WTC11 (cell line): ENCODE measurements at regions of chr3 and their contacts with region 1.

Region 1: GRCh38 chr3:67113802-67114407 is 115.8 kb downstream of the KBTBD8 start:
- DNase-seq: peak; percentile 88
- ATAC-seq: peak; percentile 95
- H3K4me3 Mint-ChIP-seq: no peak overlapping the region
- H3K27ac Mint-ChIP-seq: no peak overlapping the region
- H3K4me1 Mint-ChIP-seq: peaks cover 12% of the 10 kb centered on the region
- H3K27me3 Mint-ChIP-seq: no peaks in the 10 kb centered on the region
- CTCF ChIP-seq: peak; percentile 91

Region 2: GRCh38 chr3:66989860-66990665 is 123.8 kb before region 1 on chr3:
- CTCF ChIA-PET with region 1: interaction called, 15 read pairs
- POLR2A ChIA-PET with region 1: no interaction called
- DNase-seq: no peak
- ATAC-seq: no peak
- H3K4me3 Mint-ChIP-seq: peak overlapping the region; percentile 50
- H3K27ac Mint-ChIP-seq: peak overlapping the region; percentile 99
- H3K4me1 Mint-ChIP-seq: peaks cover 24% of the 10 kb centered on the region
- H3K27me3 Mint-ChIP-seq: 0 out of 2 replicates have a peak, but pooled peaks cover 4% of the 10 kb centered on the region
- CTCF ChIP-seq: no peak

Region 3: GRCh38 chr3:67016522-67017080 is 97.3 kb before region 1 on chr3:
- CTCF ChIA-PET with region 1: no interaction called
- POLR2A ChIA-PET with region 1: no interaction called
- DNase-seq: no peak
- ATAC-seq: no peak
- H3K4me3 Mint-ChIP-seq: no peak overlapping the region
- H3K27ac Mint-ChIP-seq: no peak overlapping the region
- H3K4me1 Mint-ChIP-seq: peaks cover 25% of the 10 kb centered on the region
- H3K27me3 Mint-ChIP-seq: no peaks in the 10 kb centered on the region
- CTCF ChIP-seq: no peak

Region 4: DNA sequence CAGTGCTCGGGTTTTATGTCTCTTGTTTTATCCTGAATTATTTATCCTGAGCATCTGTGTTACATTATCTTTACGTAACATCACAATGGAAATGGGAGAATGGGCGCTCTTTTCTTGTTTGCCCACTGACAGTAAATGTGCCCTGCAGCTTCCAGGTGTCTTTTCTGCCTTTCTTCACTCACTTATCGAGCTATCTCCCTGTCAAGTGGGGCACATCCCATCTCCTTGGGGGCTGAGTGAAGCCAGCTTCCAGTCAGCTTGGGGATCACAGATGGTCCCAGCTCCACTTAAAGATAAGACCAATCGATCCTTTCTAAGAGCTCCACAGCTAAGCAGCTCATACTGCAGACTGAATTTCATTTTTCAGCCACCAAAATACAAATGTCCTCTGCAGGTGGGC is 10.0 kb after region 1 on chr3:
- CTCF ChIA-PET with region 1: interaction called, 23 read pairs
- POLR2A ChIA-PET with region 1: no interaction called
- DNase-seq: no peak
- ATAC-seq: no peak
- H3K4me3 Mint-ChIP-seq: no peak overlapping the region
- H3K27ac Mint-ChIP-seq: no peak overlapping the region
- H3K4me1 Mint-ChIP-seq: peaks cover 23% of the 10 kb centered on the region
- H3K27me3 Mint-ChIP-seq: no peaks in the 10 kb centered on the region
- CTCF ChIP-seq: no peak

Region 5: GRCh38 chr3:67357610-67358458 is 243.9 kb after region 1 on chr3:
- CTCF ChIA-PET with region 1: interaction called, 27 read pairs
- POLR2A ChIA-PET with region 1: no interaction called
- DNase-seq: peak; percentile 72
- ATAC-seq: peak; percentile 98
- H3K4me3 Mint-ChIP-seq: no peak overlapping the region
- H3K27ac Mint-ChIP-seq: peak overlapping the region; percentile 24
- H3K4me1 Mint-ChIP-seq: peaks cover 24% of the 10 kb centered on the region
- H3K27me3 Mint-ChIP-seq: no peaks in the 10 kb centered on the region
- CTCF ChIP-seq: no peak

Region 6: DNA sequence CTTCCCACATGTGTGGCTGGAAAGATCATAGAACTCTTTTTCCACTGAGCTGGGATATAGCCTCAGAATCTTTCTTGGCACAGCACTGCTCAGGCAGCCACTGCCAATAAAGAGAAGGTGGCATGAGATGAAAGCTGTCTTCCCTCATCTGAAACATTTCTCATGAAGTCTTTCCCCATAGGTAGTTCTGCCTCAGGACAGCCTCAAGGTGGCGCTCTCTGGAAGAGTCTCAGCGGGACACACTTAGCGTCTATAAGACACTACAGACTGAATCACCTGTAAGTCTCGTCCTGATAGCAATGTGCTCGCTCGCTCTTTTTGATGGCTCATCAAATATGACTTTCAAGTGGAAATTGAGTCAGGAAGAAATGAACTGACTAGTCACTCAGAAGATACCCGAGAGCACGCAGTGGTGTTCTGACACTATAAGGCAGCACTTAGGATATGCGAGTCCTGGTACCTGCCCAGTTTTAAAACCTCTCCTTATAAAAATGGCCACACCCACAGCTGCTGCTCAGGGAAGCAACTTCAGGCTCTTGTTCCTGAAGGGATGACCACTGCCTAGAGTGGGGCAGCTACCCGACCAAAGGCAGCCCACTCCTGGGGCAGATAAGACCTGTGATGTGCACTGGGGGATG is 271.0 kb after region 1 on chr3:
- CTCF ChIA-PET with region 1: interaction called, 23 read pairs
- POLR2A ChIA-PET with region 1: no interaction called
- DNase-seq: peak; percentile 78
- ATAC-seq: peak; percentile 89
- H3K4me3 Mint-ChIP-seq: no peak overlapping the region; the same call in 1 of the 2 replicates
- H3K27ac Mint-ChIP-seq: no peak overlapping the region
- H3K4me1 Mint-ChIP-seq: peaks cover 17% of the 10 kb centered on the region
- H3K27me3 Mint-ChIP-seq: no peaks in the 10 kb centered on the region
- CTCF ChIP-seq: peak; percentile 72